Activated CD4-positive, alpha-beta memory T cell treated with anti-CD3 and anti-CD28 coated beads for 36 hours (primary cell): ENCODE measurements at regions of chr20 and their contacts with region 1.

Region 1: GRCh38 chr20:58236612-58237330 is 8.3 kb upstream of the ANKRD60 start:
- DNase-seq: peak; percentile 92
- H3K4me3 Mint-ChIP-seq: peak overlapping the region; percentile 81
- H3K27ac Mint-ChIP-seq: peak overlapping the region; percentile 78
- H3K4me1 Mint-ChIP-seq: peaks cover 23% of the 10 kb centered on the region
- H3K27me3 Mint-ChIP-seq: peaks cover 2% of the 10 kb centered on the region

Region 2: GRCh38 chr20:58224974-58225373 is 11.8 kb before region 1 on chr20:
- CTCF ChIA-PET with region 1: interaction called, 31 read pairs
- POLR2A ChIA-PET with region 1: no interaction called
- intact Hi-C with region 1: loop called (anchors 1 kb)
- DNase-seq: no peak
- H3K4me3 Mint-ChIP-seq: no peak overlapping the region
- H3K27ac Mint-ChIP-seq: no peak overlapping the region
- H3K4me1 Mint-ChIP-seq: peaks cover 25% of the 10 kb centered on the region
- H3K27me3 Mint-ChIP-seq: peaks cover 56% of the 10 kb centered on the region

Region 3: DNA sequence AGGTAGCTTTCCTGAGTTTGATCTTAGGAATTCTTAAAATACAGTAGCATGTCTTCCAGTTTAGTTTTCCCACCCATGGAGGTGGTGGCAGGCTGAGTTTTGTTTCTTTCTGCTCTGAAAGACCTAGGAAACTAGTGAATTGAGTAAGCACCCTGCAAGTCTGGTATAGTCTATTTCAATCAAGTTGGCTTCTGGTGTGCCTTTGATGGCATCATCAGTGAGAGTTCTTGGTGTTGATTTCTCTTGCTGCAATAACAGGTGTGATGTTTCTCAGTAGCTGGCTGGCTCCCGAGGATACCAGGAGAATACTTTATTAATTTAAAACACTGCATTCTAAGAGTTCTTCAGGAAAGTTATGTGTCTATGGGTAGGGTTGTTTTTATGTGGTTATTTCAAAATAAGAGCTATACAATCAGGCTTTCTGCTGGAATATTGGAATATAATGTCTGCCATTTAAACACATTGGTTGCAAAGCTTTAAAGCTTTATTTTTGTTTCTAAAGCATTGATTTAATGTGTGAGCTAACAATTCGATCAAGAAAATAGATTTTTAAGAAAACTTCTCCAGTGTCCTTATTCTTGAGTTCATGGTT is 171.3 kb after region 1 on chr20:
- CTCF ChIA-PET with region 1: no interaction called
- POLR2A ChIA-PET with region 1: no interaction called
- intact Hi-C with region 1: loop called (anchors 5 kb)
- DNase-seq: peak; percentile 37
- H3K4me3 Mint-ChIP-seq: peak overlapping the region; percentile 12
- H3K27ac Mint-ChIP-seq: peak overlapping the region; percentile 79
- H3K4me1 Mint-ChIP-seq: peaks cover 36% of the 10 kb centered on the region
- H3K27me3 Mint-ChIP-seq: no peaks in the 10 kb centered on the region

Region 4: DNA sequence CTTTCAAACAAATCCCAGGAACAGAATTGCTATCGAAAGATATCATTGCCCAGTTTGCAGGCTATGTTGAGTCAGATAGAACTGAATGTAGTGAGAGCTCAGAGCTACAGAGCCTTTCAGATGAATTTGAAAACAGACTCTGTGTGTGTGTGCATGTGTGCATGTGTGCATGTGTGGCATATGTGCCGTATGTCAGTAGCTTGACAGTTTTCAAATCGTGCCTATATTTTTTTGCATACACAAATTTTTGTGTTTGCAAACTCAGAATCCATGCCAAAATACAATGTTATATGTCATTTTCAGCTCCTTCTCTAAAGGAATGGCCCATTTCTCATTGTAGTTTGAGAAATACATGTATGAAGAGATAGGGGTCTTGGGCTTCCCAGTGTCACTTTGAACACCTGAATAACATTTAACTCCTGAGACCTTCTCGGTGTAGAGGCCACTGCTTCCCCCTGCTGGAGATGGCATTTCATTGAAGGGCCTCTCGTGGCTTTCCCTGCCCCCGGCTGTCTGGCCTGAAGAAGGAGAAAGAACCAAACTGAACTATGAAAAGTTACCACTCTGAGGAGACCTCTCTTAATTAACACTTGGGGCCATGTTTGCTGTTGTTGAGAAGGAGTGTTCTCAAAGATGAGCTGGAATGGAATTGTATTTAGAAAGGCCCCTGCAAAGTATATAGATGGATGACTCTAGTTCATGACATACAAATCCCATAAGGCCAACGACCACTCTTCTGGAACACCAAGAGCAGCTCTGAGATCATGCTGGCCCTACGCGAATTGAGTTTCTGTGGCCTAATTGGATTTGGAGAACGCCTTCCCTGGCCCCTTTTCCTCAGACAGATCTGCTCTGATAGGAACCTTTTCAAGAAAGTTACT is 211.0 kb after region 1 on chr20:
- CTCF ChIA-PET with region 1: interaction called, 13 read pairs
- POLR2A ChIA-PET with region 1: interaction called, 3 read pairs
- intact Hi-C with region 1: loop called (anchors 1 kb)
- DNase-seq: peak; percentile 72
- H3K4me3 Mint-ChIP-seq: no peak overlapping the region
- H3K27ac Mint-ChIP-seq: no peak overlapping the region
- H3K4me1 Mint-ChIP-seq: peaks cover 2% of the 10 kb centered on the region
- H3K27me3 Mint-ChIP-seq: no peaks in the 10 kb centered on the region

Region 5: GRCh38 chr20:58850693-58851174 is 614.0 kb after region 1 on chr20 and contains the start of gene GNAS-AS1:
- CTCF ChIA-PET with region 1: no interaction called
- POLR2A ChIA-PET with region 1: no interaction called
- intact Hi-C with region 1: loop called (anchors 5 kb)
- DNase-seq: peak; percentile 90
- H3K4me3 Mint-ChIP-seq: peak within 1 kb of the TSS; percentile 86
- H3K27ac Mint-ChIP-seq: no peak within 1 kb of the TSS
- H3K4me1 Mint-ChIP-seq: peaks cover 28% of the 10 kb centered on the region
- H3K27me3 Mint-ChIP-seq: peaks cover 48% of the 10 kb centered on the region
- total RNA-seq, gene GNAS-AS1: 1.1 to 1.3 TPM